ENCODE measurements at regions of chr2 and their contacts with region 1.

Region 1: DNA sequence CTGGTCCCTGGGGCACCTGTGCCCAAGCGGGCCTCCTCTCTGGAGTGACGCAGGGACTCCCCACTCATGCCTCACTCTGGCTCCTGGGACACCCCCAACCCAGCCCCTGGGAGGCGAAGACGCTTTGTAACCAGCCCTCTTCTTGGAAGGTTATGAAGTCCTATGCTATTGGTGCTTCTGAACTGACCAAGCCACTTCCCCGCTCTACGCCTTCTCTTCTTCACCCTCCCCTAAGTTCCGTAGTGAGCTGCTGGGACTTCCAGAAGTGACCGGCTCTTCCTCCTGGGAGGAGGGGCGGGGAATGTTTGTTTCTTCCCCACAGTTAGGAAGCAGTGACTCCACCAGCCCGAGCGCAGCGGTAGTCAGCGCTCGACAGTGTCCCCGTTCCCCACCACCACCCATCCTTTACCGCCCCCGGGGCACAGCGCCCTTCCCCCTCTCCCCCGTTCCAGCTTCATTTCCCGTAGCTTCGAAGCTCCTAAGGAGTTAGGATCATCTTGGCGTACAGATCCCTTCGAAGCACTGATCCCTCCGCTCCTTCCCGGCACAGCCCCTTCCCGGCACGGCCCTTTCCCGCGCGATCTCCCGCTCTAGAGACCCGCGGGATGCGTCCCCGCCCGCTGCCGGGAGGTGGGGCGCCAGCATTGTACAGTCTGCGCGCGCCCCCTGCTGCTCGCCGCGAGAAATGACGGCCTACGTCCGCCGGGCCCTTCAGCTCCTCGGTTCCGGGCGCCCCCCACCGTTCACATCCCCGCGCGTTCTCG is 25.3 kb upstream of the NOTO start:
- DNase-seq: peak; percentile 95
- ATAC-seq: peak; percentile 72
- H3K4me3 Mint-ChIP-seq: peak overlapping the region; percentile 71
- H3K27ac Mint-ChIP-seq: peak overlapping the region; percentile 63
- H3K4me1 Mint-ChIP-seq: peaks cover 31% of the 10 kb centered on the region
- H3K27me3 Mint-ChIP-seq: peaks cover 42% of the 10 kb centered on the region

Region 2: DNA sequence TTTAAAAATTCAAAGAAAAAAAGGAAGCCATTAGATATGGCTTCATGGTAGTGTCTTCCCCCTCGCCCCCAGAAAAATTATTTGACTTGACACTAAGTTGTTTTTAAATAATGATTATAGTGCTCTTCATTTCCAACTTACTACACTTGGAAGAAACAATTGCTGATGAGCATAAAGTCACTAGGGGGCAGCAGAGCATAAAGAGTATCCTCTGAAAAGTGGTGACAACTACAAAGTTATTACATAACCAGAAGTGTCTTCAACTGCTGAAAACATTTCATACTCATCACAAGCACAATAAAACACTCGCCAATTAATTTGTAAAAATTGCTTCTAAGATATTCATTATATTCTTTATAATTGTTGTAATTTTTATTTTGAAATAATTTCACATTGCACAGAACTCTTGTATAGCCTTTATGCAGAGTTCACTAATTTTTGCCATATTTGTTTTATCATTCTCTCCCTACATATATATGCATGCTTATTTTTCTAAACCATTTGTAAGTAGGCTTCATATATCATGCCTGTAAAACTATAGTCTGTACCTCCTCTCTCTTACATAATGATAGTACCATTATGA is 406.1 kb before region 1 on chr2:
- CTCF ChIA-PET with region 1: interaction called, 3 read pairs
- POLR2A ChIA-PET with region 1: no interaction called
- intact Hi-C with region 1: loop called (anchors 2 to 10 kb)
- DNase-seq: peak; percentile 71
- ATAC-seq: no peak
- H3K4me3 Mint-ChIP-seq: no peak overlapping the region
- H3K27ac Mint-ChIP-seq: no peak overlapping the region
- H3K4me1 Mint-ChIP-seq: no peaks in the 10 kb centered on the region
- H3K27me3 Mint-ChIP-seq: no peaks in the 10 kb centered on the region

Region 3: DNA sequence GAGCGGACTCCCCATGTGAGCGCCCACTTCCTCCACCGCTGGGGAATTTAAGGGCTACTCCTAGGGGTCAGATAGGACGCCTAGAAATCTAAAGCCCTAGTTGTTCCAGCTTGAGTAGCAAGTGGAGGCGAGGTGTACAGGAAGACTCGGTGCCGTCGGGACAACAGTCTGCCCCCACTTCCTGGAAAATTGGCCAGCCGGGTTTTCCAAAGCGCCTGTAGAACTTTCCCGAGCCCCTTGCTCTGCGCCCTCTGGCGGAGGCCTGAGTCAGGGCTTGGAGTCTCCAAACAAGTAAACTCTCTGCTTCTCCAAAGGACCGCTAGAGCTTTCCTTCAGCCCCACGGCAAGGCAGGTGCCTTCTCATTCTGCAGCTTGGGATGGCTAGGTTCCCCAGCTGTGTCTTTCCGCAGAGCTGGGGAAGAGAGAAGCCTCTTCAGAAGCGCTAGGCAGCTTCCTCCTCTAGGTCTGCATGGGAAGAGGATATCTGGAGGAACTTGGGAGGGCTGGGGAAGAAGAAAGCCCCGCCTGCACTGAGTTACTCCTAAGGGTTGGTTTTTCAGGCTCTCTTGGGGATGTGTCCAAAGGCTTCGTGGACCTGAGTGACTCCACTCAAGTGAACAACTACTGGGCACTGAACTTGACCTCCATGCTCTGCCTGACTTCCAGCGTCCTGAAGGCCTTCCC is 289.2 kb before region 1 on chr2:
- CTCF ChIA-PET with region 1: interaction called, 33 read pairs
- POLR2A ChIA-PET with region 1: interaction called, 4 read pairs
- intact Hi-C with region 1: loop called (anchors 1 to 2 kb)
- DNase-seq: peak; percentile 78
- ATAC-seq: peak; percentile 51
- H3K4me3 Mint-ChIP-seq: peak overlapping the region; percentile 70
- H3K27ac Mint-ChIP-seq: no peak overlapping the region
- H3K4me1 Mint-ChIP-seq: peaks cover 10% of the 10 kb centered on the region
- H3K27me3 Mint-ChIP-seq: peaks cover 53% of the 10 kb centered on the region

Region 4: DNA sequence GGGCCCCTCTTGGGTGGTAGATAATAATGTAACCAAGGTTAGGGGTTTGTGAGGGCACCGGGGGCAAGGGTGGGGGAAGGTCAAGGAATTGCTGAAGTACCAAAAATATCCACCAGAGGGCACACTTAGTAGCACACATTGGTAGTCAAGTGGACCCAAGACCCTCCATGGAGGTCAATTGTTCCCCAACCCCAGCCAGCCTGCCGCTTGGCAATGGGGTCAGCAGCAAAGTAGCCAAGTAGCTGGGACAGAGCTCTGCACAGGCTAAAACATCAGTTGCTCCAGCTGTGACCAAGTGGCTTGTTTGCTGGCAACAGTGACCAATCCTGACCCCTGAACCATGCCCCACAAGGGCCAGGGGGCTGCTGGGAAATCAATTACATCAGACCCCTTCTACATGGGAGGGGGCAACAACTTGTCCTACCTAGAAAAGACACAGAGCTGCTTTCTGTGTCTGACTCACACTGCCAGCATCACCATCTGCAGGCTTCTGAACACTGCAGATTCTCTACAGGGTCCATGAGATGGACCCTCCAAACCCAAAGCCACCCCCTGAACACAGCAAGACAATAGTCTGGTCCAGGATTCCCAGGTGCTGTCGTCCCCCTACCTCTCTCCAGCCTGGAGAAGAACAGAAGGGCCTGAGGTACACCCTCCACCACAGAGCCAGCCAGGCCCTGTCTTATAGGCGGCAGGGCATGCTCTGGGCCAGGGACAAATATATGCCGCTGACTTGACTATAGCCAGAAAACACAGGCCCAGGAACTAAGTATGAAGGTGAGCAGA is 183.7 kb before region 1 on chr2:
- CTCF ChIA-PET with region 1: interaction called, 57 read pairs
- POLR2A ChIA-PET with region 1: no interaction called
- intact Hi-C with region 1: loop called (anchors 1 kb)
- DNase-seq: peak; percentile 50
- ATAC-seq: peak; percentile 42
- H3K4me3 Mint-ChIP-seq: no peak overlapping the region
- H3K27ac Mint-ChIP-seq: no peak overlapping the region
- H3K4me1 Mint-ChIP-seq: no peaks in the 10 kb centered on the region
- H3K27me3 Mint-ChIP-seq: no peaks in the 10 kb centered on the region

Region 5: GRCh38 chr2:73112913-73113633 is 64.0 kb before region 1 on chr2 and contains the start of gene RAB11FIP5:
- CTCF ChIA-PET with region 1: interaction called, 18 read pairs
- POLR2A ChIA-PET with region 1: interaction called, 3 read pairs
- intact Hi-C with region 1: loop called (anchors 1 to 2 kb)
- DNase-seq: peak; percentile 87
- ATAC-seq: peak; percentile 84
- H3K4me3 Mint-ChIP-seq: peak within 1 kb of the TSS; percentile 79
- H3K27ac Mint-ChIP-seq: peak within 1 kb of the TSS; percentile 40
- H3K4me1 Mint-ChIP-seq: peaks cover 23% of the 10 kb centered on the region
- H3K27me3 Mint-ChIP-seq: peaks cover 2% of the 10 kb centered on the region
- total RNA-seq, gene RAB11FIP5: 16.4 to 16.5 TPM

Region 6: DNA sequence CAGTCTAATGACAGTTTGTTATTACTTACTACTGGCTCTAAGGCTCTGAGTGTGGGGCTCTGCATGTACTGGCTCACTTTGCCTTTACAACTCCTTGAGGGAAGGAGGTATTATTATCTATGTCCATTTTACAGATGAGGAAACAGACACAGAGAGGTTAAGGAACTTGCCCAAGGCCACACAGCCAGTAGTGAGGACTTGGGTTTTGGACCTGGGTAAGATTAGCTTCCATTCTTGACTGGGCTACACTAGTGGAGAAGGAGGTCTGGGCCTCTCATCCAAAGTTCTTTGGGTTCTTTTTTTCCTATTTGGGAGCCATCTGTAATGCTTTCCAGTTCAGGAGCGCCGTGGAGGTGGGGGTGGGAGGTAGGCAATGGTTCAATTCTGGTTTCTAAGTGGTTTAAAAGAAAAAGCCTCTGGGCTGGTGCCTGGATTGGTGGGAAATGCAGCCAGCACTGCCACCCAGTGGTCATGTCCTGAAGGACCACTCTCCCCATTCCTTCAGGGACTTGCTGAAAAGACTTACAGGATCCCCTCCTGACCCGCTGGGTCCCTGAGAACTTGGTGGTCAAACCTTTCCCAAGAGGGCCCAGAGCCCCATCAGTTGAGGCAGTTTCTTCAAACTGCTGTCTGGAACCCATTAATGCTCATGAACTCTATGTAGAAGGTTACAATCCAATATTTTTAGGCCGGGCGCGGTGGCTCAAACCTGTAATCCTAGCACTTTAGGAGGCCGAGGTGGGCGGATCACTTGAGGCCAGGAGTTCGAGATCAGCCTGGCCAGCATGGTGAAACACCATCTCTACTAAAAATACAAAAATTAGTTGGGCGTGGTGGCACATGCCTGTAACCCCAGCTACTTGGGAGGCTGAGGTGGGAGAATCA is 13.3 kb before region 1 on chr2:
- CTCF ChIA-PET with region 1: interaction called, 21 read pairs
- POLR2A ChIA-PET with region 1: no interaction called
- intact Hi-C with region 1: no loop called
- DNase-seq: peak; percentile 81
- ATAC-seq: peak; percentile 97
- H3K4me3 Mint-ChIP-seq: no peak overlapping the region
- H3K27ac Mint-ChIP-seq: no peak overlapping the region
- H3K4me1 Mint-ChIP-seq: no peaks in the 10 kb centered on the region
- H3K27me3 Mint-ChIP-seq: peaks cover 11% of the 10 kb centered on the region

Region 7: GRCh38 chr2:73212448-73213176 is 35.5 kb after region 1 on chr2:
- CTCF ChIA-PET with region 1: interaction called, 29 read pairs
- POLR2A ChIA-PET with region 1: interaction called, 5 read pairs
- intact Hi-C with region 1: loop called (anchors 1 to 2 kb)
- DNase-seq: peak; percentile 89
- ATAC-seq: peak; percentile 79
- H3K4me3 Mint-ChIP-seq: no peak overlapping the region
- H3K27ac Mint-ChIP-seq: no peak overlapping the region
- H3K4me1 Mint-ChIP-seq: peaks cover 32% of the 10 kb centered on the region
- H3K27me3 Mint-ChIP-seq: peaks cover 7% of the 10 kb centered on the region

Region 8: GRCh38 chr2:73333564-73333963 is 156.5 kb after region 1 on chr2:
- CTCF ChIA-PET with region 1: no interaction called
- POLR2A ChIA-PET with region 1: no interaction called
- intact Hi-C with region 1: no loop called
- DNase-seq: no peak
- ATAC-seq: no peak
- H3K4me3 Mint-ChIP-seq: no peak overlapping the region
- H3K27ac Mint-ChIP-seq: no peak overlapping the region
- H3K4me1 Mint-ChIP-seq: no peaks in the 10 kb centered on the region
- H3K27me3 Mint-ChIP-seq: peaks cover 20% of the 10 kb centered on the region